Panc1 (cell line): ENCODE measurements at regions of chr6 and their contacts with region 1.

Region 1: DNA sequence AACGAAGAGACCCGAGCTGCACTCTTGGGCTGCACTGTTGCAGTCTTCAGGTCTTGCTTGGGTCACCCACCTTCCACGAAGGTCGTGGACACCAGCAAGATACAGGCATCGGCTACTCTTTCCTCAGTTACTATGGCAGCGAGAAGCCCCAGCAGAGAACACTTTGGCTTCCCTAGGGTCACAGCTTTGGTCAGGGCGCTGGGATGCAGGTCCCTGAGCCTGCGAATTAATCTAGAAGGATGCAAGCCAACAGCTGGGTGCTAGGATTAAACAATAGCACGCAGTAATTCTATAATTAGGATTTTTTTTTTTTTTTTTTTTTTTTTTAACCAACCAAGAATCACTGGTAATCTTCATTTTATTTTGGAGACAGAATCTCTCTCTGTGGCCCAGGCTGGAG is 2.1 kb downstream of the KHDC3L start:
- DNase-seq: no peak
- ATAC-seq: no peak
- H3K4me3 ChIP-seq: no peak overlapping the region
- H3K27ac ChIP-seq: no peak overlapping the region
- H3K4me1 ChIP-seq: no peaks in the 10 kb centered on the region
- H3K27me3 ChIP-seq: no peaks in the 10 kb centered on the region
- CTCF ChIP-seq: no peak

Region 2: GRCh38 chr6:73121421-73121993 is 243.0 kb before region 1 on chr6:
- CTCF ChIA-PET with region 1: no interaction called
- POLR2A ChIA-PET with region 1: no interaction called
- in situ Hi-C with region 1: no loop called
- intact Hi-C with region 1: no loop called
- DNase-seq: no peak
- ATAC-seq: no peak
- H3K4me3 ChIP-seq: no peak overlapping the region
- H3K27ac ChIP-seq: no peak overlapping the region
- H3K4me1 ChIP-seq: no peaks in the 10 kb centered on the region
- H3K27me3 ChIP-seq: no peaks in the 10 kb centered on the region
- CTCF ChIP-seq: no peak

Region 3: DNA sequence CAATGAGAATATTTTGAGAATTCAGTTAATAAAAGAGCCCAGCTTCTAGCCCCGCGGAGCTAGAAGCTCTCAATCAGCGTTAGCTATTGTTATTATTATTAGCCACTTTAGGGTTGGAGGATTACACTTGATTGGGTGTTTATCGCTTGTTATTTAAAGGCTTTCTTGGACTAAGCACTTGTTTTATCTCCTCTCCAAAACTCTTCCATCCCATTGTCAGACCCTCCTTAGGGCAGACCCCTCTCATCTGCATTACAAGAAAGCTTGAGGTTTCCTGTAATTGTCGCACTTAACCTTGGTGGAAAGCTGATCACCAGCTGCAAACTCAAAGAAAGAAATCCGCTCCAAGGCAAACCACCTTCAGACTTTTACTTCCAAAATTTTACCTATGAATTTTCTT is 15.2 kb before region 1 on chr6:
- CTCF ChIA-PET with region 1: interaction called, 11 read pairs
- POLR2A ChIA-PET with region 1: no interaction called
- in situ Hi-C with region 1: no loop called
- intact Hi-C with region 1: no loop called
- DNase-seq: no peak
- ATAC-seq: no peak
- H3K4me3 ChIP-seq: no peak overlapping the region
- H3K27ac ChIP-seq: no peak overlapping the region
- H3K4me1 ChIP-seq: no peaks in the 10 kb centered on the region
- H3K27me3 ChIP-seq: no peaks in the 10 kb centered on the region
- CTCF ChIP-seq: no peak

Region 4: GRCh38 chr6:73604020-73604419 is 239.5 kb after region 1 on chr6:
- CTCF ChIA-PET with region 1: no interaction called
- POLR2A ChIA-PET with region 1: no interaction called
- in situ Hi-C with region 1: no loop called
- intact Hi-C with region 1: no loop called
- DNase-seq: no peak
- ATAC-seq: no peak
- H3K4me3 ChIP-seq: no peak overlapping the region
- H3K27ac ChIP-seq: peak overlapping the region; percentile 31; the same call in 1 of the 2 replicates
- H3K4me1 ChIP-seq: peaks cover 11% of the 10 kb centered on the region
- H3K27me3 ChIP-seq: no peaks in the 10 kb centered on the region
- CTCF ChIP-seq: no peak